Endothelial cell of umbilical vein (primary cell): ENCODE measurements at regions of chr6 and their contacts with region 1.

Region 1: GRCh38 chr6:13422681-13423221 is 64.6 kb downstream of the GFOD1 start:
- DNase-seq: peak; percentile 95
- H3K4me3 ChIP-seq: peak overlapping the region in 1 of 3 experiments; percentile 19
- H3K27ac ChIP-seq: peak overlapping the region; percentile 92
- H3K4me1 ChIP-seq: peaks cover 44% of the 10 kb centered on the region
- H3K27me3 ChIP-seq: no peaks in the 10 kb centered on the region
- CTCF ChIP-seq: no peak
- POLR2A ChIP-seq: no peak

Region 2: DNA sequence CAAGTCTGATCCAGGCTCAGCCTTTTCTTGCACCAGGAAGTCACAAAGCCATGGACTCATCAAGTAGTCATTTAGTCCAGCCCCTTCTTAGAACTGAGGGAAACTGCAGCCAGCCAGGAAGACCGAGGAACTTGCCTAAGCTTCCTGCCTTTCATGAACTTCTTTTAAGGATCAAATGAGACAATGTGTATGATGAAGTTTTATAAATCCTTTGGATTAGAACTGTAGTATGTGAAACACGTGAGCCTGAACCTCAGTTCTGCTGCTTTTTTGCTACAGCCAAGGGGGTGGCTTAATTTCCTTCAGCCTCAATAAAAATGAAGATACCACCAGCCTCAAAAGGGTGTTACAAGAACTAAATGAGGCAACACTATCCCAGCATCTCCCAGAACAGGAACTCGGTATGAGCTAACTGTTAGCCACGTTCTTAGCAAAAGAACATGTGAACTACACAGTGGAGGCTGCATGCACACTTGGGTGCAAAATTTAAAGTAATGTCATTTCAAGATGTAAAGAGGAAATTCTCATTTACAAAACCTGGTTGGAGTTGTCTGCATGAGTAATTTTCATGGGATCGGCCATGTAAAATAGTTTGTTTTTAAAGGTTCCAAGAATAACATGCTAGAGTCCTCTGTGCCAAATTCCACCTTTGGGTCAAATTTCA is 18.4 kb before region 1 on chr6:
- CTCF ChIA-PET with region 1: interaction called, 10 read pairs
- POLR2A ChIA-PET with region 1: no interaction called
- dilution Hi-C with region 1: no loop called
- intact Hi-C with region 1: loop called (anchors 1 kb)
- DNase-seq: peak; percentile 83
- H3K4me3 ChIP-seq: peak overlapping the region in 1 of 3 experiments; percentile 5
- H3K27ac ChIP-seq: peak overlapping the region; percentile 57
- H3K4me1 ChIP-seq: peaks cover 24% of the 10 kb centered on the region
- H3K27me3 ChIP-seq: no peaks in the 10 kb centered on the region
- CTCF ChIP-seq: no peak
- POLR2A ChIP-seq: no peak

Region 3: GRCh38 chr6:13454286-13455221 is 31.8 kb after region 1 on chr6:
- CTCF ChIA-PET with region 1: no interaction called
- POLR2A ChIA-PET with region 1: no interaction called
- dilution Hi-C with region 1: no loop called
- intact Hi-C with region 1: loop called (anchors 2 kb)
- DNase-seq: peak; percentile 32
- H3K4me3 ChIP-seq: no peak overlapping the region
- H3K27ac ChIP-seq: peak overlapping the region; percentile 2
- H3K4me1 ChIP-seq: peaks cover 11% of the 10 kb centered on the region
- H3K27me3 ChIP-seq: no peaks in the 10 kb centered on the region
- CTCF ChIP-seq: no peak
- POLR2A ChIP-seq: no peak

Region 4: DNA sequence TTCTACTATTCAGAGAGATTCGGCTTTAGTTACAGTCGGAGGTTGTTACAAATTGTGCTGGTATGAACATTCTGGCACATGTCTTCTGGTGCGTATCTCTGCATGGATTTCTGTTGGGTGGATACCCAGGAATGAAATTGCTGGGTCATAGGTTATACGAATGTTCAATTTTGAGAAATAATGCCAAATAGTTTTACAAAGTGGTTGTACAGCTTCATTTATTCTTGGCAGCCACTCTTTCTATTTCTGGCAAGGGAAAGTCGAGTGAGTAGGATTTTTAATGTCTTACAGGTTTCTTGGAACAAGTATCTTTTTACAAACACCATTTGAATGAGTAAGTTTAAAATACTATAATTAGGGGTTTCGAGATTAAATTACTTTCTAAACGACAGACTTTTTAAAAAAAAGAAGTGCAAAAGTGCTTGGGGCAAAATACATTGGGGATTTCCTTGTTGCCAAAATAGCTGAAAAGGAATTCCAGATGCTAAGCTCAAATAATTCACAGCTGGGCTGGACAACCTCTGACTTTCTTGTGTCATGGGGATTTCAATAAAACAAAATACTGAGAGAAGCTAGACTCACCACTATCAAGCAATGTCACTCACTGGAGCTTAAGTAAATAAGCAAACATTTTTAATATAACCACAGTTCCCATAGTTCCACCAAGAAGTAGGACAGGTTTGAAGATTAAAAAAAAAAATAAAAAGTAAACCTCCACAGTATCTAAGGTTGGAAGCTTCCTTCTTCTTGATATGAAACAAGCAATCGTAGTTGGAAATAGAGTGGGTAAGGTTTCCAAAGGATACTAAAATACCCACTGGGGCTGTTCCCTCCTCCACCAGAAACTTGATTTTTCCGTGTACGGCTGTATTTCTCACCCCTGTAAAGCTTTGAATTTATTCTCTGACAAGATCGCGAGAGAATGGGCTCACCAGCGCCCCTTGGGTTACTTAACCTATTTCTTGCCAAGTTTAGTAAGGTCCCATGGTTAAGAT is 86.3 kb after region 1 on chr6:
- CTCF ChIA-PET with region 1: no interaction called
- POLR2A ChIA-PET with region 1: no interaction called
- dilution Hi-C with region 1: no loop called
- intact Hi-C with region 1: no loop called
- DNase-seq: no peak
- H3K4me3 ChIP-seq: no peak overlapping the region
- H3K27ac ChIP-seq: no peak overlapping the region
- H3K4me1 ChIP-seq: peaks cover 16% of the 10 kb centered on the region
- H3K27me3 ChIP-seq: no peaks in the 10 kb centered on the region
- CTCF ChIP-seq: no peak
- POLR2A ChIP-seq: no peak

Region 5: GRCh38 chr6:13526727-13527670 is 104.2 kb after region 1 on chr6:
- CTCF ChIA-PET with region 1: no interaction called
- POLR2A ChIA-PET with region 1: no interaction called
- dilution Hi-C with region 1: no loop called
- intact Hi-C with region 1: loop called (anchors 2 kb)
- DNase-seq: peak; percentile 94
- H3K4me3 ChIP-seq: no peak overlapping the region
- H3K27ac ChIP-seq: peak overlapping the region; percentile 65
- H3K4me1 ChIP-seq: peaks cover 37% of the 10 kb centered on the region
- H3K27me3 ChIP-seq: no peaks in the 10 kb centered on the region
- CTCF ChIP-seq: no peak
- POLR2A ChIP-seq: peak; percentile 63

Region 6: DNA sequence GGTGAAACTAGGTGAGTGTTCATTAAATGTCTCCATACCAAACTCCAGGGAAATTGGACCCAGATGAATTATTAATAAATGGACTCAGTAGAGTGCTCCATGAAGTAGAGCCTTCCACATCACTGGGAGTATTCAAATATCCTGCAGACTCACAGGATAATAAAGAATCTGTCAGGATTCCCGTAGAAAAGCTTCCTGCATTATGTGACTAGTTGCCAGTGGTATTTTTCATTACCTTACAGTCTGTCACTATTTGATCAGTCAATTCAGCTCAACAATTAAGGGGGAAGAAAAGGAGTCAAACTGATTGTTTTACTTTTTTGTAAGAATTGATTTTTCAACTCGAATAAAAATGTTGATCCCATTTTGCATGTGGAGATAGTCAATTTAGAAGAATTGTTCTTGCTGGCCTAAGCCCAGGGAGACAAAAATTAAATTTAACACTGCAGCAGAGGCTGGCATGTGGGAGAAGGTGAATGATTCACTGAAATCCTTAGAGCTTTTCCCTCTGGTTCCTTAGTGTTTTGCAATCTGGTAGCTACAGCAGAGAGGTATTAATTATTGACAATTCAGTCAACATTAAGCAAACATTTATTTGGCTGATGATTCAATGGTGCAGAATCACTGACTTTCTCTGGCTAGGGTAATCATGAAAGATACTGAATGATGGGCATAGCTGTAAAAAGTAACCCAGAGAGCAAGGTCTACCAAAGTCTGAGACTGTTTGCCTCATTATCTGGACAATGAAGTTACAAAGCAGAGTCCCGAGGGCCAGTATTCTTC is 1137.2 kb after region 1 on chr6:
- CTCF ChIA-PET with region 1: no interaction called
- POLR2A ChIA-PET with region 1: no interaction called
- dilution Hi-C with region 1: no loop called
- intact Hi-C with region 1: no loop called
- DNase-seq: no peak
- H3K4me3 ChIP-seq: no peak overlapping the region
- H3K27ac ChIP-seq: no peak overlapping the region
- H3K4me1 ChIP-seq: no peaks in the 10 kb centered on the region
- H3K27me3 ChIP-seq: no peaks in the 10 kb centered on the region
- CTCF ChIP-seq: no peak
- POLR2A ChIP-seq: no peak